ENCODE measurements at regions of chr3 and their contacts with region 1.

Region 1: DNA sequence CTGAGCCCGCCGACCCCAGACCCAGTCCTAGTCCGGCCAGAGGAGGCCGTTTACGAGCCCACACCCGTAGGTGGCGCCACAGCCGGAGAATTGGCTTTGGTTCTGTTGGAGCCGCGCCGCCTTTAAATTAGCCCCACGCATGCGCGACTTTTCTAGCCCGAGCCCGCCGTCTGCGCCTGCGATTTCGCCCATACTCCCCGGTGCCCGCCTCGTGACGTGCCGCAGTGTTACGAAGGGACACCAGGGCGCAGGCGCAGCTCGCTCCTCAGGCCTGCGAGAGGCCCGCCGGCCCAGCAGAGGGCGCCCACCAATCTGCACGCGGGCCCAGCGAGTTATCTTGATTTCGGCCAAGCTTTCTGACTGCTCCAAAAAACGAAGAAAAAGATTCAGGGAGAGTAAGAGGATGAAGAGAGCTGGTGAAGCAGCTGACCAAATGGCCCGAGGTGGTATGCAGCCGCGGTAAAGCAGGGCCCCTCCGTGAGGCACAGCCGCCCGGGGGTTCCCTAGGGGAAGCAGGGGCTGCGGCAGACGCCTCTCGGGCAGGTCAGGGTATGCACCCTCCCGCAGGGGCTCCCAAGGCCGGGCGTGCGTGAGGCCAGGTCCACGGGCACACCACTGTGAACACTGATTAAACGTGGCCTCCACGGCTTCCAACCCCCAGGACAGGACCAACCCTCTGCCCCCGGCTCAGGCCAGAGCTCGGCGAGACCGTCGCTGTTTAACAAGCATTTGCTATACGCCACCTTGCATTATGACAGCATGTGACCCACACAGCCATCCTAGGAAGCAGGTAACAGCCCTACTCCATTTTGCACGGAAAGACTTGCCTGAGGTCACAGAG is 32.8 kb downstream of the RPN1 start:
- DNase-seq: peak; percentile 85
- ATAC-seq: peak; percentile 98
- H3K4me3 ChIP-seq: peak overlapping the region; percentile 80
- H3K27ac ChIP-seq: peak overlapping the region; percentile 60
- H3K4me1 ChIP-seq: peaks cover 14% of the 10 kb centered on the region
- H3K27me3 ChIP-seq: no peaks in the 10 kb centered on the region
- CTCF ChIP-seq: peak; percentile 77 to 96 (median 80)
- EP300 ChIP-seq: no peak
- POLR2A ChIP-seq: peak; percentile 72
- RAD21 ChIP-seq: peak; percentile 71

Region 2: GRCh38 chr3:128095222-128095703 is 522.5 kb before region 1 on chr3:
- CTCF ChIA-PET with region 1: interaction called, 3 read pairs
- POLR2A ChIA-PET with region 1: no interaction called
- RAD21 ChIA-PET with region 1: no interaction called
- SMC1A ChIA-PET with region 1: no interaction called
- in situ Hi-C with region 1: loop called (anchors 25 kb)
- intact Hi-C with region 1: no loop called
- DNase-seq: no peak
- ATAC-seq: peak; percentile 100
- H3K4me3 ChIP-seq: no peak overlapping the region
- H3K27ac ChIP-seq: no peak overlapping the region; the same call in none of the 2 replicates
- H3K4me1 ChIP-seq: no peaks in the 10 kb centered on the region
- H3K27me3 ChIP-seq: no peaks in the 10 kb centered on the region
- CTCF ChIP-seq: peak; percentile 83 to 93 (median 89)
- EP300 ChIP-seq: no peak
- POLR2A ChIP-seq: no peak
- RAD21 ChIP-seq: peak; percentile 77

Region 3: DNA sequence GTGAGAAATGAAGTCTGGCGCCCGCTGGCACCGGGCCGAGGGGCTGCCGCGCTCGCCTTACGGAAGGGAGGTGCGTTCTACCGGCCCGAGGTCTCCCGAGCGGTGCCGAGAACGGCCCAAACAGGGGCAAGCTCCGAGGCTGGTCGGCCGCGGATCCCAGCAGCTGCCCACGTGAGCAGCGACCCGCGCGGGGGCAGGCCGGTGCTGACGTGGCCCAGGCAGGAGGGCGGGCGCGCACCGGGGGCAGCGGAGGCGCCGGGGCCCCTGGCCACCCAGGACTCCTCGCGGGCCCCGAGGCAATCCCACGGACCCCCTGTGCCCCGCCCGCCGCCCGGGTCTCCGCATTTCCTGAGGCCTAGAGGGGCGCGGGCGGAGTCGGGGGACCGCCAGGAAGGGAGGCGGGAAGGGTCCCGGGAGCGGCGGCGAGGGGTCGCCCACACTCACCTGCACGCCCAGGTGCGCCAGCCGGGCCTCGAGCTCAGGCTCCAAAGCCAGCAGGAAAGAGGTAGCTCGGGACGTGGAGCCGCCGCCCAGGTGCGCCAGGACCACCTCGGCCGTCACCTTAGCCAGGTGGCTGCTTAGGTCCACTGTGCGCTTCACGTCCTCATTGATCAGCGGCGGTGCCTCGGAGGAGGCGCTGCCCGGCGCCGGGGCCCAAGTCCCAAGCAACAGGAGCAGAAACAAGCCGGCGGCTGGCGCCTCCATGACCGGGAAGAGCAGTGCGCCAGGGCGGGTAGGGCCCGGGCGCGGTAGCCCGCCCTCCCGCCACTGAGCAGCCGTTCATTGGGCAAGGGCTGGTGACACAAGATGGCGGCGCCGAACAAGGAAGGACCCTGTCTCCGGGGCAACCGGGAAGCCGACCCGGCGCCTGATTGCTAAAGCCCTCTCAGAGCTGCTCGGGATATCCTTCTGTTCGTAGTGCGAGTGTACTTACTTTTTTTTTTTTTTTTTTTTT is 32.6 kb after region 1 on chr3 and contains the start of gene RPN1:
- CTCF ChIA-PET with region 1: interaction called, 18 read pairs
- POLR2A ChIA-PET with region 1: interaction called, 4 read pairs
- RAD21 ChIA-PET with region 1: interaction called, 9 read pairs
- SMC1A ChIA-PET with region 1: interaction called, 4 read pairs
- in situ Hi-C with region 1: no loop called
- intact Hi-C with region 1: no loop called
- DNase-seq: peak; percentile 74
- ATAC-seq: peak; percentile 98
- H3K4me3 ChIP-seq: peak within 1 kb of the TSS; percentile 100
- H3K27ac ChIP-seq: peak within 1 kb of the TSS; percentile 90
- H3K4me1 ChIP-seq: no peaks in the 10 kb centered on the region
- H3K27me3 ChIP-seq: no peaks in the 10 kb centered on the region
- CTCF ChIP-seq: no peak
- EP300 ChIP-seq: no peak
- POLR2A ChIP-seq: peak; percentile 94
- RAD21 ChIP-seq: no peak
- polyA plus RNA-seq, gene RPN1: 56.1 to 58.3 TPM

Region 4: GRCh38 chr3:128680602-128681368 is 63.0 kb after region 1 on chr3:
- CTCF ChIA-PET with region 1: interaction called, 24 read pairs
- POLR2A ChIA-PET with region 1: interaction called, 6 read pairs
- RAD21 ChIA-PET with region 1: interaction called, 12 read pairs
- SMC1A ChIA-PET with region 1: interaction called, 7 read pairs
- in situ Hi-C with region 1: no loop called
- intact Hi-C with region 1: loop called (anchors 2 kb)
- DNase-seq: peak; percentile 93
- ATAC-seq: peak; percentile 99
- H3K4me3 ChIP-seq: peak overlapping the region; percentile 83
- H3K27ac ChIP-seq: peak overlapping the region; percentile 98
- H3K4me1 ChIP-seq: 0 out of 2 replicates have a peak, but pooled peaks cover under 1% of the 10 kb centered on the region
- H3K27me3 ChIP-seq: no peaks in the 10 kb centered on the region
- CTCF ChIP-seq: peak; percentile 96 to 99 (median 98)
- EP300 ChIP-seq: 0 out of 4 replicates have a peak, but pooled peaks of 1 of the 2 experiments have one; percentile 25
- POLR2A ChIP-seq: peak; percentile 98
- RAD21 ChIP-seq: peak; percentile 85

Region 5: GRCh38 chr3:128787256-128788240 is 169.8 kb after region 1 on chr3:
- CTCF ChIA-PET with region 1: interaction called, 11 read pairs
- POLR2A ChIA-PET with region 1: no interaction called
- RAD21 ChIA-PET with region 1: interaction called, 9 read pairs
- SMC1A ChIA-PET with region 1: no interaction called
- in situ Hi-C with region 1: no loop called
- intact Hi-C with region 1: no loop called
- DNase-seq: no peak
- ATAC-seq: peak; percentile 87
- H3K4me3 ChIP-seq: peak overlapping the region; percentile 57; the same call in 1 of the 2 replicates
- H3K27ac ChIP-seq: peak overlapping the region; percentile 24
- H3K4me1 ChIP-seq: peaks cover 55% of the 10 kb centered on the region
- H3K27me3 ChIP-seq: no peaks in the 10 kb centered on the region
- CTCF ChIP-seq: peak; percentile 26 to 59 (median 59); a peak in 5 of 6 replicates
- EP300 ChIP-seq: no peak
- POLR2A ChIP-seq: no peak
- RAD21 ChIP-seq: peak; percentile 36; the same call in 1 of the 2 replicates

Region 6: DNA sequence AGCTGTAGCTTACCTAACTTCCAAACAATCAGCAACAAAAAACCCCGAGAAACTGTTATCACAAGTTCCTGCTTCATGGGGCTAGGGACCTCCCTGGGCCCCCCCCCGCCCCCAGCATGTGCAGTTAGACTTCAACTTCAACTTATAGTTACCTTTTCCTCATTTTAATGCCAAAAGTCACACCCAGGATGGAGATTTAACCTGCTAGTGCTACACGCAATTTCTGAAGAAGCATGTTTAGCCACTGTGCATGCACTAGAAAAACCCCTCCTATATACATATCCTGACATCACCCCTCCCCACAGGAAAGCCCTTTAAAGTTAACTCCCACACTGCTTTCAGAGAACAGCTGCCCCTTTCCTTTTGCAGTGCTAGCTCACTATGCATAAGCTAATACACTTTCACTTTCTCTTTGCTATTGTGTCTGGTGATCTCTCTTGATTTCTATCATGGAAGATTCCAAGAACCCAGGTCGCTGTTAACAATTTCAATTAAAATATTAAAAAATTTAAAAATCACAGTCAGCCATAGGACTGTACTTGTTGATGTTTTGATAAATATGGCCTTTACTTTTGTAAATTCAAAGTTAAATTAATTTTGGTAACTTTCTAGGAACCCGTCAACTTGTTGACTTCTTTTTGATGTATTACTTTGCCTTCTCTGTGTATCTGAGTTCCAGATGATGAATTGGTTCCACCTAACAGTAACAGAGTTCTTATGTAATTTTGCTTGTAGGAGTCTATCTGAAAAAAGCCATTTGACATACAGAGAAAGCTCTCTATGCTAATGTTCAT is 186.4 kb after region 1 on chr3:
- CTCF ChIA-PET with region 1: interaction called, 12 read pairs
- POLR2A ChIA-PET with region 1: interaction called, 4 read pairs
- RAD21 ChIA-PET with region 1: interaction called, 7 read pairs
- SMC1A ChIA-PET with region 1: interaction called, 3 read pairs
- in situ Hi-C with region 1: no loop called
- intact Hi-C with region 1: no loop called
- DNase-seq: peak; percentile 83
- ATAC-seq: peak; percentile 97
- H3K4me3 ChIP-seq: no peak overlapping the region
- H3K27ac ChIP-seq: peak overlapping the region; percentile 49
- H3K4me1 ChIP-seq: peaks cover 33% of the 10 kb centered on the region
- H3K27me3 ChIP-seq: no peaks in the 10 kb centered on the region
- CTCF ChIP-seq: no peak
- EP300 ChIP-seq: peak; percentile 12 to 55; a peak in 3 of 4 replicates
- POLR2A ChIP-seq: no peak
- RAD21 ChIP-seq: no peak

Region 7: GRCh38 chr3:128879125-128879969 is 261.6 kb after region 1 on chr3 and contains the start of gene ACAD9:
- CTCF ChIA-PET with region 1: interaction called, 21 read pairs
- POLR2A ChIA-PET with region 1: interaction called, 3 read pairs
- RAD21 ChIA-PET with region 1: interaction called, 6 read pairs
- SMC1A ChIA-PET with region 1: no interaction called
- in situ Hi-C with region 1: no loop called
- intact Hi-C with region 1: no loop called
- DNase-seq: peak; percentile 97
- ATAC-seq: peak; percentile 92
- H3K4me3 ChIP-seq: peak within 1 kb of the TSS; percentile 92
- H3K27ac ChIP-seq: peak within 1 kb of the TSS; percentile 85
- H3K4me1 ChIP-seq: peaks cover 18% of the 10 kb centered on the region
- H3K27me3 ChIP-seq: no peaks in the 10 kb centered on the region
- CTCF ChIP-seq: no peak
- EP300 ChIP-seq: peak; percentile 48 to 53; a peak in 1 of 4 replicates
- POLR2A ChIP-seq: peak; percentile 96
- RAD21 ChIP-seq: no peak
- polyA plus RNA-seq, gene ACAD9: 12.7 to 21.5 TPM

Measured in GM12878 (cell line).